Heart left ventricle (tissue), 16 donors: ENCODE measurements at regions of chr20 and their contacts with region 1.

Region 1: GRCh38 chr20:23287354-23288190 is 63.0 kb upstream of the NXT1 start:
- DNase-seq: no peak
- ATAC-seq: no peak
- H3K4me3 ChIP-seq: no peak overlapping the region
- H3K27ac ChIP-seq: no peak overlapping the region
- H3K4me1 ChIP-seq: peaks cover 0 to 14% (median 4%) of the 10 kb centered on the region in 12 donors
- H3K27me3 ChIP-seq: no peaks in the 10 kb centered on the region
- CTCF ChIP-seq: no peak
- POLR2A ChIP-seq: no peak

Region 2: GRCh38 chr20:22471156-22471844 is 816.3 kb before region 1 on chr20:
- intact Hi-C with region 1: no loop called
- DNase-seq: no peak
- ATAC-seq: no peak
- H3K4me3 ChIP-seq: no peak overlapping the region
- H3K27ac ChIP-seq: no peak overlapping the region
- H3K4me1 ChIP-seq: no peaks in the 10 kb centered on the region
- H3K27me3 ChIP-seq: peaks cover 0 to 33% (median 3%) of the 10 kb centered on the region in 9 donors
- CTCF ChIP-seq: no peak
- POLR2A ChIP-seq: no peak

Region 3: GRCh38 chr20:23225407-23226072 is 62.0 kb before region 1 on chr20:
- intact Hi-C with region 1: loop called in 1 of 10 experiments (anchors 10 kb)
- DNase-seq: peak in 2 of 5 donors; percentile 69 to 75
- ATAC-seq: peak in 3 of 4 donors; percentile 56 to 86 (median 84)
- H3K4me3 ChIP-seq: no peak overlapping the region
- H3K27ac ChIP-seq: peak overlapping the region in 1 of 12 donors; percentile 5
- H3K4me1 ChIP-seq: peaks cover 0 to 34% (median 0%) of the 10 kb centered on the region in 12 donors
- H3K27me3 ChIP-seq: no peaks in the 10 kb centered on the region
- CTCF ChIP-seq: no peak
- POLR2A ChIP-seq: no peak